Activated CD4-positive, alpha-beta T cell treated with anti-CD3 and anti-CD28 coated beads, Interleukin-2, amount 10 ng/mL, durations not matched to agents 24 days and 14 days (primary cell): ENCODE measurements at regions of chr6 and their contacts with region 1.

Region 1: DNA sequence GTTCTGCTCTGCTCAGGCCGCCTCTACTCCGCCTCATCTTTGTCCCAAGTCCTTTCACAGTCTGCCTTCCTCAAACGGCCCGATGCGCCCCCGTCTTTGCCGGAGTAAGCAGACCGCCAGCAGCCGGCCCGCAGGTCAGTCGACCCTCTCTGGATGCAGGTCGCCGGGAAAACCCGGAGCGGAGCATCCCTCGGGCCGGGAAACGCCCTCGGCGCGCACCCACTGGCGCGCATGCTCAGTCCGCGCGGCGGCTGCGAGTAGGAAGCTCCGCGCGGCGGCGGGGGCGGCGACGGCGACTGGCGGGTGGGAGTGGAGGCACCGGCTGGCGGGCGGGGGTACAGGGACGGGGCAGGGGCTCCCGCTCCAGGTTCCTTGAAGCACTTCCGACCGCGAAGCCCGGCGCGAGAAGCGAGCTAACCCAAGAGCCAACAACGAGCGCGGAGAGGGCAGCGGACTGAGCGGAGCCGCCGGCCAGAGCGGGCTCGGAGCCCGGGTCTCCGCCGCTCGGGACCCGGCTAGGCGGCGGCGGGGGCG is at the start of gene LRRC1:
- DNase-seq: peak; percentile 97
- H3K4me3 Mint-ChIP-seq: peak within 1 kb of the TSS; percentile 98
- H3K27ac Mint-ChIP-seq: peak within 1 kb of the TSS; percentile 92
- H3K4me1 Mint-ChIP-seq: peaks cover 28% of the 10 kb centered on the region
- H3K27me3 Mint-ChIP-seq: peaks cover 55% of the 10 kb centered on the region
- total RNA-seq, gene LRRC1: 2.3 and 2.7 TPM in 2 replicates

Region 2: GRCh38 chr6:53064726-53065215 is 730.0 kb before region 1 on chr6:
- intact Hi-C with region 1: loop called (anchors 2 kb)
- DNase-seq: peak; percentile 98
- H3K4me3 Mint-ChIP-seq: peak overlapping the region; percentile 100
- H3K27ac Mint-ChIP-seq: peak overlapping the region; percentile 100
- H3K4me1 Mint-ChIP-seq: peaks cover 46% of the 10 kb centered on the region
- H3K27me3 Mint-ChIP-seq: no peaks in the 10 kb centered on the region

Region 3: GRCh38 chr6:53544470-53545308 is 250.1 kb before region 1 on chr6 and contains the start of gene GCLC:
- intact Hi-C with region 1: loop called (anchors 1 kb)
- DNase-seq: peak; percentile 96
- H3K4me3 Mint-ChIP-seq: peak within 1 kb of the TSS; percentile 95
- H3K27ac Mint-ChIP-seq: peak within 1 kb of the TSS; percentile 95
- H3K4me1 Mint-ChIP-seq: peaks cover 35% of the 10 kb centered on the region
- H3K27me3 Mint-ChIP-seq: peaks cover 19% of the 10 kb centered on the region
- total RNA-seq, gene GCLC: 21.3 and 25.0 TPM in 2 replicates

Region 4: DNA sequence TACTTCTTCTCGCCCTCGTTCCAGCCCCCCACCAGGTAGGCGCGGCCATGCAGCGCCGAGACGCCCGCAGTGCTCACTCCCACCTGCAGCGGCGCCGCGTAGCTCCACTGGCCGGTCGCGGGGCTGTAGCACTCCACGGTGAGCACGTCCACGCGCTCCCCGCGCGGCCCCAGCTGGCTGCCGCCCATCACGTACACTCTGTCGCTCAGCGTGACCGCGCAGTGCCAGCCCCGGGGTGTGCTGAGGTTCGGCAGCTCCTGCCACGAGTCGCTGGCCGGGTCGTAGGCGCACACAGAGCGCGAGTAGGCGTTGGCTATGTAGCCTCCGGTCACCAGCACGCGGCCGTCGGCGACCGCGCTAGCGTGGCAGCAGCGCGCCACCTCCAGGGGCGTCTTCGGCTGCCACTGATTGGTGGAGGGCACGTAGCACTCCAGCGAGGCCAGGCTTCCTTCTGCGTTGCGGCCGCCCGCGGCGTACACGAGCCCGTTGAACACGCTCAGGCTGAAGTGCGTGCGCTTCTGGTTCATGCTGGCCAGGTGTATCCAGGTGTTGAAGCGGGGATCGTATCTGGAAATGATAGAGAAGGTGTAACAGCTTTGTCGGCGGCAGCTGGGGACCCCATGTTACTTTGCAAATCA is 142.9 kb before region 1 on chr6:
- intact Hi-C with region 1: loop called (anchors 5 kb)
- DNase-seq: peak; percentile 92
- H3K4me3 Mint-ChIP-seq: peak overlapping the region; percentile 90
- H3K27ac Mint-ChIP-seq: peak overlapping the region; percentile 95
- H3K4me1 Mint-ChIP-seq: peaks cover 22% of the 10 kb centered on the region
- H3K27me3 Mint-ChIP-seq: peaks cover 23% of the 10 kb centered on the region

Region 5: GRCh38 chr6:53734473-53735299 is 60.1 kb before region 1 on chr6:
- intact Hi-C with region 1: loop called (anchors 2 kb)
- DNase-seq: peak; percentile 83
- H3K4me3 Mint-ChIP-seq: peak overlapping the region; percentile 26
- H3K27ac Mint-ChIP-seq: no peak overlapping the region
- H3K4me1 Mint-ChIP-seq: peaks cover 34% of the 10 kb centered on the region
- H3K27me3 Mint-ChIP-seq: no peaks in the 10 kb centered on the region

Region 6: DNA sequence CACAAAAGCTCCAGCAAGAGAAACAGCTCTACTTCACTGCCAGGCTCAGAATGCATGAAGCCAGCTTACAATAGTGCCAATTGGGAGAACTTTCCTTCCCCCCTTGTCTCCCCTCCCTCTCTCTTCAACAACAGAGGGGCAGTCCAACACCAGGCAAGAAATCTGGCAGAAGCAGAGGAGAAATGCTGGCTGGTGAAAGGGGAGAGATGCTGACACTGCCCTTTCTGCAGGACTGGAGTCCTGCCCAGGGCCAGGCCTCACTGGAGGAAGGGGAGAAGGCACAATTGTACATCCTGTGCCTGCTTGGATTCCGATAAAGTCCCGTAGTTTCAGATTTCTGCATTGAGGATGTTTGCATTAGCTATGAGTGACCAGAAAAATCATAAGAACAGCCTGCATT is 148.6 kb after region 1 on chr6:
- intact Hi-C with region 1: loop called (anchors 10 kb)
- DNase-seq: no peak
- H3K4me3 Mint-ChIP-seq: no peak overlapping the region
- H3K27ac Mint-ChIP-seq: no peak overlapping the region
- H3K4me1 Mint-ChIP-seq: peaks cover 4% of the 10 kb centered on the region
- H3K27me3 Mint-ChIP-seq: peaks cover 12% of the 10 kb centered on the region